GM12878 (cell line): ENCODE measurements at regions of chr2 and their contacts with region 1.

Region 1: GRCh38 chr2:45889053-45889452 is 237.6 kb downstream of the PRKCE start:
- DNase-seq: peak; percentile 73
- ATAC-seq: peak; percentile 96
- H3K4me3 ChIP-seq: no peak overlapping the region
- H3K27ac ChIP-seq: peak overlapping the region; percentile 85
- H3K4me1 ChIP-seq: peaks cover 54% of the 10 kb centered on the region
- H3K27me3 ChIP-seq: no peaks in the 10 kb centered on the region
- CTCF ChIP-seq: peak; percentile 31 to 63 (median 51); a peak in 4 of 6 replicates
- EP300 ChIP-seq: peak in 1 of 2 experiments; percentile 47; a peak in 1 of 4 replicates
- POLR2A ChIP-seq: 0 out of 2 replicates have a peak, but pooled peaks have one; percentile 29
- RAD21 ChIP-seq: peak; percentile 13; the same call in 1 of the 2 replicates

Region 2: DNA sequence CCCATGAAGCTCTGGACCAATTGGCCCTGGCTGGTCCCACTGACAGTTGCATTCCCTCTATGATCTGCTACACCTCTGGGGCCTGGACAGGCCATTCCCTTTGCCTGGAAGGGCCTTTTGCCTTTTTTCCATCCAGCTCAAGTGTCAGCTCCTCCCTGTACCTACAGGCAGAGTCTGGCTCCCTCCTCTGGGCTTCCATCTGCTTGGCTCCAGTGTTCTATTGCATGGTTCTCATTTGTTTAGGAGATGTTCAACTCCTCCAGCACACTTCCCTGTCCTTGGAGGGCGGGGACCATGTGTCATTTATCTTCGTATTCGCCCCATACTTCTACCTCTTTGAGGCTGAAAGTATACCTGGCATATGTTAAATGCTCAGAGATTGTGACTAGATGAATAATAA is 176.5 kb before region 1 on chr2:
- CTCF ChIA-PET with region 1: no interaction called
- POLR2A ChIA-PET with region 1: no interaction called
- RAD21 ChIA-PET with region 1: no interaction called
- SMC1A ChIA-PET with region 1: no interaction called
- in situ Hi-C with region 1: no loop called
- intact Hi-C with region 1: no loop called
- DNase-seq: no peak
- ATAC-seq: peak; percentile 30; the same call in 1 of the 3 replicates
- H3K4me3 ChIP-seq: no peak overlapping the region
- H3K27ac ChIP-seq: no peak overlapping the region
- H3K4me1 ChIP-seq: peaks cover 11% of the 10 kb centered on the region
- H3K27me3 ChIP-seq: no peaks in the 10 kb centered on the region
- CTCF ChIP-seq: peak in 1 of 3 experiments; percentile 14; a peak in 1 of 6 replicates
- EP300 ChIP-seq: no peak
- POLR2A ChIP-seq: no peak
- RAD21 ChIP-seq: 0 out of 2 replicates have a peak, but pooled peaks have one; percentile 28

Region 3: DNA sequence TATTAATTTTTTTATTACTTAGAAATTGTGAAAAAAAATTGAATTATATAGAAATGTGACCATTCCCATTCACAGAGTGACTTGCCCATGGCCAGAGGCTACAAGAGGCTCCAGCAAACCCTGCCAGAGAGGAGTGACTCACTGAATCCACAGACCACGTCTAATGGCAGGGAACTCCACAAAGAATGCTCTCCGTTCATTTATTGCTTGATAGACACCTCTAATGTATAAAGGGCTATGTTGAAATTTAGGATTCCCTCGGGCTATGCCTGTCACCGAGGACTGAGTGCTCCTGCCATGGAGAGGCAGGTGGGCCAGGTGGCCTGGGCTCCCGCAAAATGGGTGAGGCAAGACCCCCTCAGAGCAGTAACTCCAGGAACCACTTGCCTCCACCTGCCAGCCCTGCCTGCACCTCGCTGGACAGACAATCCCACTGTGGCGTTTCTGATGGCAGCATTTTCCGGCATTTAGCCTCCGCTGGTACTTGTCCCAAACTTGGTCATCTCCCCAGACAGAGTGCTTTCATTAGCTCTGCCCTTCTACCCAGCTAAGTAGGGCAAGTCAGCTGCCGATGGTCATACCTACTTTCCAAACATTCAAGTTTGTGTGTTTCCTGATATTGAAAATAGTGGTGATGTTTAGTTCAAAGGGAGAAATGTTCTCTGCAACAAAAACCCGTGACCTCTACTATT is 37.3 kb before region 1 on chr2:
- CTCF ChIA-PET with region 1: interaction called, 4 read pairs
- POLR2A ChIA-PET with region 1: interaction called, 8 read pairs
- RAD21 ChIA-PET with region 1: interaction called, 17 read pairs
- SMC1A ChIA-PET with region 1: interaction called, 224 read pairs
- in situ Hi-C with region 1: no loop called
- intact Hi-C with region 1: no loop called
- DNase-seq: no peak
- ATAC-seq: no peak
- H3K4me3 ChIP-seq: no peak overlapping the region
- H3K27ac ChIP-seq: no peak overlapping the region
- H3K4me1 ChIP-seq: peaks cover 27% of the 10 kb centered on the region
- H3K27me3 ChIP-seq: no peaks in the 10 kb centered on the region
- CTCF ChIP-seq: no peak
- EP300 ChIP-seq: no peak
- POLR2A ChIP-seq: no peak
- RAD21 ChIP-seq: no peak

Region 4: GRCh38 chr2:45869165-45869501 is 19.9 kb before region 1 on chr2:
- CTCF ChIA-PET with region 1: interaction called, 26 read pairs
- POLR2A ChIA-PET with region 1: interaction called, 19 read pairs
- RAD21 ChIA-PET with region 1: interaction called, 80 read pairs
- SMC1A ChIA-PET with region 1: interaction called, 124 read pairs
- in situ Hi-C with region 1: no loop called
- intact Hi-C with region 1: loop called (anchors 2 kb)
- DNase-seq: no peak
- ATAC-seq: no peak
- H3K4me3 ChIP-seq: no peak overlapping the region
- H3K27ac ChIP-seq: no peak overlapping the region
- H3K4me1 ChIP-seq: peaks cover 23% of the 10 kb centered on the region
- H3K27me3 ChIP-seq: no peaks in the 10 kb centered on the region
- CTCF ChIP-seq: no peak
- EP300 ChIP-seq: no peak
- POLR2A ChIP-seq: no peak
- RAD21 ChIP-seq: no peak

Region 5: DNA sequence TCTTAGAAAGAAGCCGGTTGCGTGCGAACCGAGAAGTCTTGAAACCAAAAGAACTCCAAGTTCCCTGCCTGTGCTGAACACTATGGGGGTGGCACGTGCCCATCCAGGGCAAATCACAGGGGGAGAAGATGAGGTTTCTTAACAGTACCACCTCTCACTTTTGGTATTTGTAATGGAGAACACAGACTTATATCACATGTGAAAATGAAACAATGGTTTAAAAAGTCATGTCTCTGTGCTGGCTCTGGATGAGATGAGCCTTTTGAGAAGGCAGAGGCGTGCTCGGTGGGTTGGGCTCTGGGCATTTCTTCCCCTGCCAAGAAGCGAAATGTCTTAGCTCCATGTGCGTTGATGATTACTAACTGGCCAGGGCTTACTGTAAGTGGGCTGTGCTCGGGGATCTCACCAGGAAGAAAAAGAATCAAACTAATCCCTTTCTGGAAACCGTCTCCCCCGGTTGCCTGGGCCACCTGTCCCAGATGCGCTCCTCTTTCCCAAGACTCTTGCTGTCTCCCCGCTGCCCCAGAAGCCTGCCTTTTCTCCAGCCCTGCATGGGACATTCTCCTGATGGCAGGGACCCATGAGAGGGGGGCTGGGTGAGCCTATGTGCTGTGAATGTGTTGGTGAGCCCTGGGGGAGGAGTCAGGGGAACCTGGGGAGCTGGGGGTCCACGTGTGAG is 15.4 kb after region 1 on chr2:
- CTCF ChIA-PET with region 1: interaction called, 12 read pairs
- POLR2A ChIA-PET with region 1: interaction called, 23 read pairs
- RAD21 ChIA-PET with region 1: interaction called, 53 read pairs
- SMC1A ChIA-PET with region 1: interaction called, 55 read pairs
- in situ Hi-C with region 1: no loop called
- intact Hi-C with region 1: no loop called
- DNase-seq: no peak
- ATAC-seq: peak; percentile 97
- H3K4me3 ChIP-seq: no peak overlapping the region
- H3K27ac ChIP-seq: peak overlapping the region; percentile 79
- H3K4me1 ChIP-seq: peaks cover 35% of the 10 kb centered on the region
- H3K27me3 ChIP-seq: no peaks in the 10 kb centered on the region
- CTCF ChIP-seq: no peak
- EP300 ChIP-seq: peak; percentile 52 to 54; a peak in 1 of 4 replicates
- POLR2A ChIP-seq: no peak
- RAD21 ChIP-seq: no peak

Region 6: GRCh38 chr2:46029332-46029811 is 140.3 kb after region 1 on chr2:
- CTCF ChIA-PET with region 1: no interaction called
- POLR2A ChIA-PET with region 1: no interaction called
- RAD21 ChIA-PET with region 1: no interaction called
- SMC1A ChIA-PET with region 1: no interaction called
- in situ Hi-C with region 1: no loop called
- intact Hi-C with region 1: no loop called
- DNase-seq: no peak
- ATAC-seq: no peak
- H3K4me3 ChIP-seq: no peak overlapping the region
- H3K27ac ChIP-seq: no peak overlapping the region
- H3K4me1 ChIP-seq: no peaks in the 10 kb centered on the region
- H3K27me3 ChIP-seq: no peaks in the 10 kb centered on the region
- CTCF ChIP-seq: peak; percentile 4 to 24 (median 21); a peak in 1 of 6 replicates
- EP300 ChIP-seq: no peak
- POLR2A ChIP-seq: no peak
- RAD21 ChIP-seq: no peak